CD4-positive, alpha-beta memory T cell (primary cell): ENCODE measurements at regions of chr11 and their contacts with region 1.

Region 1: GRCh38 chr11:61695917-61696316 is 15.7 kb downstream of the DAGLA start:
- DNase-seq: peak; percentile 89 to 98 (median 92)
- H3K4me3 ChIP-seq: peak overlapping the region in 1 of 2 donors; percentile 40
- H3K4me3 Mint-ChIP-seq: peak overlapping the region; percentile 61 to 83 (median 76)
- H3K27ac ChIP-seq: peak overlapping the region; percentile 55
- H3K27ac Mint-ChIP-seq: peak overlapping the region; percentile 88 to 97 (median 94)
- H3K4me1 ChIP-seq: peaks cover 34% of the 10 kb centered on the region
- H3K4me1 Mint-ChIP-seq: peaks cover 12 to 29% (median 22%) of the 10 kb centered on the region in 4 donors
- H3K27me3 ChIP-seq: no peaks in the 10 kb centered on the region
- H3K27me3 Mint-ChIP-seq: no peaks in the 10 kb centered on the region

Region 2: GRCh38 chr11:61679893-61680621 is 15.9 kb before region 1 on chr11 and contains the start of gene DAGLA:
- CTCF ChIA-PET with region 1: interaction called, 9 read pairs
- POLR2A ChIA-PET with region 1: interaction called, 8 read pairs
- intact Hi-C with region 1: loop called (anchors 1 kb)
- DNase-seq: peak; percentile 71 to 82 (median 72)
- H3K4me3 ChIP-seq: peak within 1 kb of the TSS in 1 of 2 donors; percentile 19
- H3K4me3 Mint-ChIP-seq: peak within 1 kb of the TSS; percentile 69 to 83 (median 75)
- H3K27ac ChIP-seq: no peak within 1 kb of the TSS
- H3K27ac Mint-ChIP-seq: peak within 1 kb of the TSS in 6 of 7 donors; percentile 28 to 91 (median 52)
- H3K4me1 ChIP-seq: peaks cover 22% of the 10 kb centered on the region
- H3K4me1 Mint-ChIP-seq: peaks cover 0 to 14% (median 6%) of the 10 kb centered on the region in 4 donors
- H3K27me3 ChIP-seq: no peaks in the 10 kb centered on the region
- H3K27me3 Mint-ChIP-seq: peaks cover 4 to 16% of the 10 kb centered on the region in 2 donors
- total RNA-seq, gene DAGLA: 0.30 to 0.44 TPM

Region 3: DNA sequence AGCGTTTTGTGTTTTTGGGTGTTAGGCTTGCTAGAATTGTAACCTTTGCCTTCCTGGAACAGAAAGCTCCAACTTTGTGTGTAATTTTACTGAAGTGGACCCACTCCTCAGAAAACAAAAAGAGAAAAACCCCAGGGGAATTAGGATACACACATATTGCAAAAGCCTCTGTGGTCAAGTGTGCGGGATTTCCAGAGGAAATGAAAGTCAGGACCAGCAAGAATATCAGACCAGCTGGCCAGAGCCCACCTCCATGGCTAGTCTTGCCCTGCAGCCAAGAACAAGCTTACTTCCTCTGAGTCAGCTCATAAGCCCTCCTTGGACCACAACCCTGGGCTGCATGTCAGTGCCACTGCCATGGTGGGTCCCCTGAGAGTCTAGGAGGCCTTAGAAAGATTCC is 308.6 kb after region 1 on chr11:
- CTCF ChIA-PET with region 1: no interaction called
- POLR2A ChIA-PET with region 1: no interaction called
- intact Hi-C with region 1: no loop called
- DNase-seq: no peak
- H3K4me3 ChIP-seq: no peak overlapping the region
- H3K4me3 Mint-ChIP-seq: no peak overlapping the region
- H3K27ac ChIP-seq: no peak overlapping the region
- H3K27ac Mint-ChIP-seq: no peak overlapping the region
- H3K4me1 ChIP-seq: no peaks in the 10 kb centered on the region
- H3K4me1 Mint-ChIP-seq: no peaks in the 10 kb centered on the region
- H3K27me3 ChIP-seq: no peaks in the 10 kb centered on the region
- H3K27me3 Mint-ChIP-seq: peaks cover 0 to 5% of the 10 kb centered on the region in 2 donors